ENCODE measurements at regions of chr17 and their contacts with region 1.

Region 1: DNA sequence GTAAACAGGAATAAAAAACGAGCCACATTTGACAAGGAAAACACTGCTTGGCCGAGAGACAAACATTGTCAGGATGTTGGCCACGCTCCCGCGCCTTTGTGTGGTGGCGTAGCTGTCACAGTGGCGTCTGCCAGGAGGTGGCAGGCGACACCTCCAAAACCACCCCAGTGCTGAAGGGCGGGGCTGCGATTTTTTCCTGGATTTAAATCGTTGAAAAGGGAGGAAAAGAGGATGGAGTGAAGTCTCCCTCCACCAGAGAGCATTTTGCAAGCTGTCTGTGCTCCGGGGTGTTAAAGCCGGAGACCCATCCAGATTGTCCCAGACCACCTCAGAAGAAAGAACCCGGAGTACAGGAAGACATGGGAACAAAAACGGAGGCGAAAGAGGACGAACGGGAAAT is 12.7 kb downstream of the MRM3 start:
- DNase-seq: peak; percentile 85 to 87
- H3K4me3 ChIP-seq: peak overlapping the region; percentile 23 to 38 (median 35)
- H3K27ac ChIP-seq: peak overlapping the region; percentile 39 to 42
- H3K4me1 ChIP-seq: no peaks in the 10 kb centered on the region
- H3K27me3 ChIP-seq: no peaks in the 10 kb centered on the region
- CTCF ChIP-seq: peak; percentile 72 to 94 (median 92)
- POLR2A ChIP-seq: no peak

Region 2: DNA sequence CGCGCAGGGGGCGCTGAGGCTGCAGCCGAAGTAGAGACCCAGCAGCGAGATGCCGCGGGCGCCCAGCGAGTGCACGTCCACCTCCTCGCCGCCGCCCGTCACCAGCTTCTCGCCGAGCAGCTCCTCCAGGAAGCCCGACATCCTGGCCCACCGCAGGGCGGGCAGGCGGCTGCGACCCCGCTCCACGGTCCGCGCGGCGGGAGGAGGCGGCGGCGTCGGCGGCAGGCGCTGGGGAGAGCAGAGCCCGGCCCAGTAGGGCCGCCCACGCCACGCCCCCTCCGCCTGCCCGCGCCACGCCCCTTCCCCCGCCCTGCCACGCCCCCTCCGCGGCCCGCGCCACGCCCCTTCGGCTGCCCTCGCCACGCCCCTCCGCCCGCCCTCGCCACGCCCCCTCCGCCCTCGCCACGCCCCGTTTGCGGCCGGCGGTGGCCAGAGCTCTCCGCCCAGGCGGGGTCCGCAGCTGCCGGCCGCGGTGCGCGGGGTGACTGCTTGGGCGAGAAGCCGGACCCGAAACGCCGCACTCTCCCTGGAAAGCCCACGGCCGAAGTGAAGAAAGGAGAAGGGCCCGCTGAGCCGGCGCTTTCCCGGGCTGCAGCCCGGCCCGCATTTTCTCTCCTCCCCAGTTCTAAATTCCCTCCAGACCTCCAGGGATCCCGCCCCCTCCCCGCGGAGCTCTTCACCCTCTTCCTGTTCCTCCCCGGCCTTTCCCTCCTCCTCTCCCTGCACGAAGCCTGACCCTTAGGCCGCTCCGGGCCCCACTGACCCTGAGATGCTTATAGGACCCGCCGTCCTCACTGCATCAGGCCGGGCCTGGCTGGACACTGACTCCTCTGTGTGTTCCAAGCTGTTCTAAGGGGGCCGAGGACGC is 184.9 kb after region 1 on chr17 and contains the start of gene NXN:
- intact Hi-C with region 1: loop called (anchors 5 kb)
- DNase-seq: peak; percentile 75 to 90
- H3K4me3 ChIP-seq: peak within 1 kb of the TSS; percentile 58 to 85 (median 72)
- H3K27ac ChIP-seq: peak within 1 kb of the TSS; percentile 78 to 85
- H3K4me1 ChIP-seq: peaks cover 0 to 8% of the 10 kb centered on the region in 2 donors
- H3K27me3 ChIP-seq: no peaks in the 10 kb centered on the region
- CTCF ChIP-seq: peak in 1 of 3 donors; percentile 28
- POLR2A ChIP-seq: no peak
- total RNA-seq, gene NXN: 9.3 to 14.3 (median 12.8) TPM

Region 3: DNA sequence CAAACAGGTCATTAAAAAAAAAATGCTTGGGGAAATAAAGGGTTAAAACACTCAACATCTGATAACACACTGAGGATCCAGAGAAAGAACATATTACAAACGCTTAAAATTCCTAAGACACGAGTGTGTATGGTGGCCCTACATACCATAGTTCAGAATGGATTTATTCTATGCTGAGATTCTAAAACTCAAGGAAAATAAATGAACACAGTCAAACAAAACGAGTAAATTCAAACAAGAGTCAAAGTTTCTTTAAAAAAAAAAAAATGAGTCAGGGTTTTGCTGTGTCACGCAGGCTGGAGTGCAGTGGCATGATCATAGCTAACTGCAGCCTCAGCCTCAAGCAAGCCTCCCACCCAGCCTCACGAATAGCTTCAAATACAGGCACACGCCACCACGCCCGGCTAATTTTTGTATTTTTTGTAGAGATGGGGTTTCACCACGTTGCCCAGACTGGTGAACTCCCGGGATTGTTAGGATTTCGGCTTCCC is 643.8 kb after region 1 on chr17:
- intact Hi-C with region 1: no loop called
- DNase-seq: no peak
- H3K4me3 ChIP-seq: no peak overlapping the region
- H3K27ac ChIP-seq: no peak overlapping the region
- H3K4me1 ChIP-seq: no peaks in the 10 kb centered on the region
- H3K27me3 ChIP-seq: no peaks in the 10 kb centered on the region
- CTCF ChIP-seq: no peak
- POLR2A ChIP-seq: no peak

Measured in breast epithelium (tissue), 4 donors.